ENCODE measurements at regions of chr16 and their contacts with region 1.

Region 1: DNA sequence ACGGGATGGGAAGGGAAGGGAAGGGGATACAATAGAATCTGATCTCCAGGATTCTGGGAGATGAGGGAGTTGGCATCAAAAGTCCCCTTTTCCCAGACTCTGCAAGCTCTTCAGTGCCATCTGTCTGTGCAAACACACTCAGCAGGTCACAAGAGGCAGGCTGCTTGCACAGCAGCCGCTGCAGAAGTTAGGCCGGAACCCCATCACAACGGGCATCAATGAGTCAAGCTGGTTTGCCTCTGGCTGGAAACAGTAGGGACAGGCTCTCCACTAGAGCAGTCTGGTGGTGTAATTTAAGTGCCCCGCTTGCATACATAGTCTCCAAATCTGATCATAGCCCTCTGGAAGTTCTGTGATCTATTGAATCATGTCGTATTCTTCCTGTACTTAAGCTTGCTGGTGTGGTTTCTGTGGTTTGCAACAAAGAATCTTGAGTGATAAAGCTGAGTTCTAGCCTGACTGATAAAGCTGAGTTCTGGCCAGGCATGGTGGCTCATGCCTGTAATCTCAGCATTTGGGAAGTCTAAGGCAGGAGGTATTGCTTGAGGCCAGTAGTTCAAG is 33.7 kb upstream of the KDM8 start:
- DNase-seq: peak; percentile 86 to 93 (median 87)
- H3K4me3 ChIP-seq: no peak overlapping the region
- H3K4me3 Mint-ChIP-seq: peak overlapping the region in 7 of 8 donors; percentile 35 to 77 (median 74)
- H3K27ac ChIP-seq: no peak overlapping the region
- H3K27ac Mint-ChIP-seq: peak overlapping the region; percentile 82 to 98 (median 96)
- H3K4me1 ChIP-seq: peaks cover 67% of the 10 kb centered on the region
- H3K4me1 Mint-ChIP-seq: peaks cover 46 to 74% (median 64%) of the 10 kb centered on the region in 4 donors
- H3K27me3 ChIP-seq: no peaks in the 10 kb centered on the region
- H3K27me3 Mint-ChIP-seq: no peaks in the 10 kb centered on the region

Region 2: GRCh38 chr16:26830428-26831127 is 339.0 kb before region 1 on chr16:
- CTCF ChIA-PET with region 1: no interaction called
- POLR2A ChIA-PET with region 1: no interaction called
- intact Hi-C with region 1: no loop called
- DNase-seq: no peak
- H3K4me3 ChIP-seq: no peak overlapping the region
- H3K4me3 Mint-ChIP-seq: no peak overlapping the region
- H3K27ac ChIP-seq: no peak overlapping the region
- H3K27ac Mint-ChIP-seq: no peak overlapping the region
- H3K4me1 ChIP-seq: no peaks in the 10 kb centered on the region
- H3K4me1 Mint-ChIP-seq: no peaks in the 10 kb centered on the region
- H3K27me3 ChIP-seq: no peaks in the 10 kb centered on the region
- H3K27me3 Mint-ChIP-seq: peaks cover 7 to 16% of the 10 kb centered on the region in 2 donors

Region 3: DNA sequence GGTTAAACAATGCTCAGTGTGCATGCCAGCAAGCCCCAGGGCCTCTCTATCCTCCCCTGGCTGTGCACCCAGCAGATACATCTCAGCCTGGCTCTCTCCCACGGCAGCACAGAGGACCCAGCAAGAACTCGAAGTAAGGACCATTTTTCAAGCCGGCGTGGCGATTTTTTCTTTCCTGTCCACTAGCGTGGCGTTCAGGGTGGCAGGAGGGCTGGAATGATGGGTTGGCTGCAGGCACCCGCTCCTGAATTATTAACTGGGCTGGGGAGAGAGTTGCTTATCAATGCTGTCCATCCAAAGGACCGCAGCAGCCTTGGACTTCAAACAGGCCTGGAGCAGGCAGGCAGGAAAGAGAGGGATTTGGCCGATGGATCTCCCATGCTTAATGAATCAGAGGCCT is 95.9 kb before region 1 on chr16:
- CTCF ChIA-PET with region 1: no interaction called
- POLR2A ChIA-PET with region 1: no interaction called
- intact Hi-C with region 1: no loop called
- DNase-seq: no peak
- H3K4me3 ChIP-seq: no peak overlapping the region
- H3K4me3 Mint-ChIP-seq: no peak overlapping the region
- H3K27ac ChIP-seq: no peak overlapping the region
- H3K27ac Mint-ChIP-seq: no peak overlapping the region
- H3K4me1 ChIP-seq: no peaks in the 10 kb centered on the region
- H3K4me1 Mint-ChIP-seq: no peaks in the 10 kb centered on the region
- H3K27me3 ChIP-seq: no peaks in the 10 kb centered on the region
- H3K27me3 Mint-ChIP-seq: peaks cover 17 to 22% of the 10 kb centered on the region in 2 donors

Region 4: GRCh38 chr16:27195941-27196595 is 26.5 kb after region 1 on chr16:
- CTCF ChIA-PET with region 1: interaction called, 13 read pairs
- POLR2A ChIA-PET with region 1: interaction called, 17 read pairs
- intact Hi-C with region 1: loop called (anchors 1 kb)
- DNase-seq: peak; percentile 85 to 90 (median 86)
- H3K4me3 ChIP-seq: no peak overlapping the region
- H3K4me3 Mint-ChIP-seq: peak overlapping the region in 7 of 8 donors; percentile 46 to 89 (median 79)
- H3K27ac ChIP-seq: peak overlapping the region; percentile 43
- H3K27ac Mint-ChIP-seq: peak overlapping the region; percentile 85 to 99 (median 98)
- H3K4me1 ChIP-seq: peaks cover 70% of the 10 kb centered on the region
- H3K4me1 Mint-ChIP-seq: peaks cover 56 to 83% (median 71%) of the 10 kb centered on the region in 4 donors
- H3K27me3 ChIP-seq: no peaks in the 10 kb centered on the region
- H3K27me3 Mint-ChIP-seq: no peaks in the 10 kb centered on the region

Region 5: DNA sequence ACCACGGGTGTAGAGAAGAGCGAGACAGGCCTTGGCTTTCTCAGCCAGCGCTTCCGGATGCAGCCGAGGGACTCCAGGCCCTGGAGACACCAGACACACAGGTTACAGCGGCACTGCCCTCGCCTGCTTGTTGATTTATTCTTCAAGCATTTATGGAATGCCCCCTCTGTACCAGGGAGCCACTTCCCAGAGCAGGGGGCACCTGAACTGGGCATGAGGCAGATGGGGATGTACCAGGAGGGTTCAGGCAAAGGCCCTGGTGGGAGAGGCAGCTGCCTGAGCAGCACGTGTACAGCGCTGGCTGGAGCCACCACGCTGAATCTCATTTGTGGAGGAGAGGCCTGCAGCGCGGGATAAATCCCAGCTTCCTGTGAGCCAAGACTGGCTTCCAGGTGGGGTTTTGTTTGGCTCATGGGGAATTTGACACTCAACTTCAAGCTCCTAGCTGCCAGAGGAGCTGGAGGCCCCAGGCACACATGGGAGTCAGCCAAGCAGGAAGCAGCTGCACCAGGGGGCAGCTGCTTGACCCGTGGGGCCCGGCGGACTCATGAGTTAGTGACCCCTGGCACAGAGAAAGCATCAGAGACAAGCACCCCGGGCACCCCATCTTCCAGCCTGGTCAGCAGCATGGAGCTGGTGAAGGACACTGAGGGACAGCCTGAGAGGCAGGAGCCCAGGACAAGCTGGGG is 292.0 kb after region 1 on chr16:
- CTCF ChIA-PET with region 1: interaction called, 4 read pairs
- POLR2A ChIA-PET with region 1: interaction called, 12 read pairs
- intact Hi-C with region 1: no loop called
- DNase-seq: no peak
- H3K4me3 ChIP-seq: no peak overlapping the region
- H3K4me3 Mint-ChIP-seq: peak overlapping the region in 1 of 8 donors; percentile 57
- H3K27ac ChIP-seq: no peak overlapping the region
- H3K27ac Mint-ChIP-seq: peak overlapping the region in 5 of 7 donors; percentile 12 to 81 (median 77)
- H3K4me1 ChIP-seq: peaks cover 61% of the 10 kb centered on the region
- H3K4me1 Mint-ChIP-seq: peaks cover 34 to 67% (median 50%) of the 10 kb centered on the region in 4 donors
- H3K27me3 ChIP-seq: no peaks in the 10 kb centered on the region
- H3K27me3 Mint-ChIP-seq: no peaks in the 10 kb centered on the region